HepG2 (cell line): ENCODE measurements at regions of chr20 and their contacts with region 1.

Region 1: DNA sequence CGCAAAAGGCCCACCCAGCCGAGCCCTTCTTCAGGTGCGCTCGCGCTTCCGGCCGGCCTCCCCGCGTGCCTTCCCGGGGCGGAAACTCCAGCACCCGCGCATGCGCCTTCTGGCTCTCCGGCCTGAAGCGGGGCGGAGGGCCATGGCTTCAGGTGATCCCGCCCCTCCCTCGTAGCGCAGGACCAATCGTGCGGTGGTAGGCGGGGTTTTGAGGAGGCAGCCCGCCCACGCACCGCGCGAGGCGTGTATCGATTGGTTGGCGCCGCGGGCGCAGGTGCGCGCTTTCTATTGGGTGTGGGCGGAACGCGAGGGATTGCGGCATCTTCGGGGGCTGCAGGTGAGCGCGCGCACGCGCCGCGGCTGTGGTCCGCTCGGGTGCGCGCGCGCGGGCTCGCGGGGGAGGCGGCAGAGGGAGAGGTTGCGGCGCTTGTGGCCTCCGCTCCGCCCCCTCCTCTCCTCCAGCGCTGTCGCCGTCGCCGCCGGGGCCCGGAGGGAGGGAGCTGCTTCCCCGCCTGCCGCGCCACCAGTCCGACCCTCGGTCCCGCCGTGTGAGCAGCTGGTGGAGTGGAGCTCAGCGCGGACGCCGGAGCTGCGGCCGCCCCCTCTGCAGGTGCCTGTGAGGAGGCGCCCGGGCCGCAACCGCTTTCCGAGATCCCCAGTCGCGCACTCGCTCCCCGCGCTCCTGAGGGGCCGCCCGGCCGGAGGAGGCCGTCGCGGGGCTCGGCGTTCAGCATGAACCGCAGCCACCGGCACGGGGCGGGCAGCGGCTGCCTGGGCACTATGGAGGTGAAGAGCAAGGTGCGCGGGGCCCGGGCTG is at the start of gene PARD6B:
- DNase-seq: peak; percentile 99
- ATAC-seq: peak; percentile 80
- H3K4me3 ChIP-seq: peak within 1 kb of the TSS; percentile 88 to 96 (median 95)
- H3K27ac ChIP-seq: peak within 1 kb of the TSS; percentile 89
- H3K4me1 ChIP-seq: peaks cover 81% of the 10 kb centered on the region
- H3K27me3 ChIP-seq: no peaks in the 10 kb centered on the region; a peak in 1 of 5 replicates
- CTCF ChIP-seq: peak; percentile 46
- EP300 ChIP-seq: peak in 1 of 2 experiments; percentile 20; a peak in 1 of 4 replicates
- POLR2A ChIP-seq: peak; percentile 93 to 97
- RAD21 ChIP-seq: peak; percentile 85
- total RNA-seq, gene PARD6B: 22.2 and 26.6 TPM in 2 replicates

Region 2: GRCh38 chr20:50635667-50636503 is 95.4 kb before region 1 on chr20:
- CTCF ChIA-PET with region 1: no interaction called
- POLR2A ChIA-PET with region 1: interaction called, 3 read pairs
- in situ Hi-C with region 1: loop called (anchors 25 kb)
- intact Hi-C with region 1: no loop called
- DNase-seq: peak; percentile 77
- ATAC-seq: peak; percentile 74
- H3K4me3 ChIP-seq: peak overlapping the region in 2 of 3 experiments; percentile 6 to 67; a peak in 4 of 6 replicates
- H3K27ac ChIP-seq: no peak overlapping the region
- H3K4me1 ChIP-seq: peaks cover 35% of the 10 kb centered on the region
- H3K27me3 ChIP-seq: peaks cover 16 to 52% of the 10 kb centered on the region in 2 experiments
- CTCF ChIP-seq: peak; percentile 97
- EP300 ChIP-seq: peak in 1 of 2 experiments; percentile 46; a peak in 2 of 4 replicates
- POLR2A ChIP-seq: no peak
- RAD21 ChIP-seq: peak; percentile 89

Region 3: DNA sequence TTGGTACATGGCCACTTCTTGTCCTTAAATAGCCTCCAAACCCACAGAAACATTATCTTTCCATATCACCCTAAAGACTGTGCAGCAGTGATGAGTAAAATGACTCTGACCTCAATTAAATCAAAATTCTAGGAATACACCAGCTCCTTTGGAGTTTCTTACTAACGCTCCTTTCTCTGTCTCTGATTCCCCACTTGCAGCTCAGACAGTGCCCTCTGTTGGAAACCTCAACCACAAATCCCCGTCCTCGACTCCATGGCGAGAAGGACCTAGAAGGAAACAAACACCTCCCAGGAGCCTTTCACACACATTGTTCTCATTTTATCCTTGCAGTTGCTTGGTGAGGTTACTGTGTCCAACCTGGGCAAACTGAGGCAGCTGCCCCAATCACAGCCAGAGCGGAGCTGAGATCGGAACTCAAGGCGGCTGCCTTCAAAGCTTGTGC is 17.6 kb before region 1 on chr20:
- CTCF ChIA-PET with region 1: no interaction called
- POLR2A ChIA-PET with region 1: interaction called, 16 read pairs
- in situ Hi-C with region 1: no loop called
- intact Hi-C with region 1: no loop called
- DNase-seq: no peak
- ATAC-seq: peak; percentile 70
- H3K4me3 ChIP-seq: no peak overlapping the region
- H3K27ac ChIP-seq: no peak overlapping the region
- H3K4me1 ChIP-seq: peaks cover 44% of the 10 kb centered on the region
- H3K27me3 ChIP-seq: 0 out of 5 replicates have a peak, but pooled peaks cover 0 to 2% of the 10 kb centered on the region in 2 experiments
- CTCF ChIP-seq: peak; percentile 78
- EP300 ChIP-seq: no peak
- POLR2A ChIP-seq: no peak
- RAD21 ChIP-seq: peak; percentile 68

Region 4: GRCh38 chr20:50762435-50763201 is 31.4 kb after region 1 on chr20:
- CTCF ChIA-PET with region 1: no interaction called
- POLR2A ChIA-PET with region 1: interaction called, 12 read pairs
- in situ Hi-C with region 1: no loop called
- intact Hi-C with region 1: no loop called
- DNase-seq: peak; percentile 34
- ATAC-seq: no peak
- H3K4me3 ChIP-seq: no peak overlapping the region
- H3K27ac ChIP-seq: peak overlapping the region; percentile 66
- H3K4me1 ChIP-seq: peaks cover 73% of the 10 kb centered on the region
- H3K27me3 ChIP-seq: no peaks in the 10 kb centered on the region
- CTCF ChIP-seq: no peak
- EP300 ChIP-seq: no peak
- POLR2A ChIP-seq: no peak
- RAD21 ChIP-seq: no peak

Region 5: DNA sequence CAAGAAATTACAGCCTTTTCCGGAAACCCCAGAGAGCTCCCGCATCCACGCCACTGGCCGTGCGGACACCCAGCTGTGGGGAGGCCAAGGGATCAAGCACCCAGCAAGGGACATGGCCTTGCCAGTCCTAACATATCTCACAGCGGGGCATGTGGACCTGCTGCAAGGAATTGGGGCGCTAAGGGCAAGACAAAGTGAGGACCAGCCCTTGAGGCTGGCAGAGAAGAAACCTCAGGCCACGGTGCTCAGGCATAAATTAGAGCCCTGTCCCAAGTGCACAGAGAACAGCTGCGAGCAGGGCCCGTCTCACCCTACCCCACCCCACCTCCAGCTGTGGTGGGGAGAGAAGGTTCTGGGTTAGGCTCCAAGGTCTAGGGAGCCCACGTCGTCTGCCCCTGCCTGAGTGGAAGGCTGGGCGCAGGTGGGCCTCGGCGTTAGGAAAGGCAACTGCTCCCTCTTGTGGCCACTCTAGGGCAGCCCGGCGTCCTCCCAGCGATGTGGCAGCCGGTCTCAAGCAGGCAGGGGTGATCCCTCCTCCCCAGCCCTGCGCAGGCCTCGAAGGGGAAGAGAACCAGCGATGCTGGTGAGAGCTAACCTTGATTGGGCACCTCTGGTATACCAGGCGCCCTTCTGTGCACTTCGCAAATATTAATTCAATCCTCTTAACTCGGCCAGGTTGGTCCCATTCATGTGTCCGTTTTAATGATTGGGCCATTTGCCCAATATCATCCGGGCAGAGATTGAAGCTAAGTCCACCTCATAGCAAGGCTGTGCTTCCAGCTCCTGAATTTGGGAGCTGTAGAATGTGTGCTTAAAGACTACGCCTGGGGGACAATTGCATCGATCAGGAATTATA is 575.5 kb after region 1 on chr20:
- CTCF ChIA-PET with region 1: no interaction called
- POLR2A ChIA-PET with region 1: no interaction called
- in situ Hi-C with region 1: no loop called
- intact Hi-C with region 1: no loop called
- DNase-seq: peak; percentile 56
- ATAC-seq: peak; percentile 99
- H3K4me3 ChIP-seq: no peak overlapping the region
- H3K27ac ChIP-seq: no peak overlapping the region
- H3K4me1 ChIP-seq: no peaks in the 10 kb centered on the region
- H3K27me3 ChIP-seq: peaks cover 0 to 29% of the 10 kb centered on the region in 2 experiments; a peak in 3 of 5 replicates
- CTCF ChIP-seq: peak; percentile 100
- EP300 ChIP-seq: no peak
- POLR2A ChIP-seq: no peak
- RAD21 ChIP-seq: peak; percentile 98